ENCODE measurements at regions of chr11 and their contacts with region 1.

Region 1: GRCh38 chr11:33542921-33543320 is 157.7 kb downstream of the C11orf91 start:
- DNase-seq: peak; percentile 72
- H3K4me3 ChIP-seq: no peak overlapping the region
- H3K27ac ChIP-seq: no peak overlapping the region
- H3K4me1 ChIP-seq: no peaks in the 10 kb centered on the region
- H3K27me3 ChIP-seq: no peaks in the 10 kb centered on the region
- CTCF ChIP-seq: peak; percentile 74 to 79
- POLR2A ChIP-seq: no peak

Region 2: DNA sequence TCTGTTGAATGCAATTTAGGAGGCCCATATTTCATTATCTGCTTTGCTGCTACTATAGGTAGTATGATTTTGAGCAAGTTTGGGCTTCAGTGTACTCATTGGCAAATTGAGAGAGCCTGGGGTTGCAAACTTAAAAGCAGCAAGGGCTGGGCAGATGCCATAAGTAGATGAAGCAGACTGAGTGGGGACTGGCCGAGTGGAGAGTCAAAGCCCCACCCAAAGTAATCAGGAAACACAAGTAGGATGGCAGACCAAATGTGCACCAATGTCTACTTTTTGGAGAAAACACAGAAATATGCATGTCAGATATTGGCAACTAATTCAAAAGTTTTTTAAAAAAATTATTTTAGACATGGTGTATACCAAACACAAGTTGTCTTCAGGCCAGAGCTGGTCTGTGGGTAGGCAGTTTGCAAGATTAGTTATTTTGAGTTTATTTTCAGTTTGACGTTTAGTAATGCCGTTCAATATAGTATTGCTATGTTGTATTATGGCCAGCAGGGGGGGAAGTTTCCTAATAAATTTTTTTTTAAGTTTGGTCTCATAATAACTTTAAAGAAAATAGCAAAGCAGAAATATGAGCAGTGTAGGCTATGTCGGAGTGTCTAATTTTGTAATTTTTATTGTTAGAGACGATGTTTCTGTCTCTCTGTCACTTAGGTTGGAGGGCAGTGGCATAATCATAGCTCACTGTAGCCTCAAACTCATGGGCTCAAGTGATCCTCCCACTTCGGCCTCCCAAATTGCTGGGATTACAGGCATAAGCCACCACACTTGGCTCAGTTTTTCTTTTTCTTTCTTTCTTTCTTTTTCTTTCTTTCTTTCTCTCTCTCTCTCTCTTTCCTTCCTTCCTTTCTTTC is 180.6 kb before region 1 on chr11:
- CTCF ChIA-PET with region 1: interaction called, 9 read pairs
- POLR2A ChIA-PET with region 1: no interaction called
- dilution Hi-C with region 1: no loop called
- intact Hi-C with region 1: loop called (anchors 1 kb)
- DNase-seq: peak; percentile 65
- H3K4me3 ChIP-seq: no peak overlapping the region
- H3K27ac ChIP-seq: no peak overlapping the region
- H3K4me1 ChIP-seq: no peaks in the 10 kb centered on the region
- H3K27me3 ChIP-seq: no peaks in the 10 kb centered on the region
- CTCF ChIP-seq: peak; percentile 28 to 35
- POLR2A ChIP-seq: no peak

Region 3: GRCh38 chr11:33376331-33377310 is 166.3 kb before region 1 on chr11:
- CTCF ChIA-PET with region 1: interaction called, 4 read pairs
- POLR2A ChIA-PET with region 1: no interaction called
- dilution Hi-C with region 1: no loop called
- intact Hi-C with region 1: loop called (anchors 5 kb)
- DNase-seq: peak; percentile 25
- H3K4me3 ChIP-seq: peak overlapping the region; percentile 68 to 84 (median 79)
- H3K27ac ChIP-seq: peak overlapping the region; percentile 70
- H3K4me1 ChIP-seq: peaks cover 45% of the 10 kb centered on the region
- H3K27me3 ChIP-seq: no peaks in the 10 kb centered on the region
- CTCF ChIP-seq: no peak
- POLR2A ChIP-seq: no peak

Region 4: GRCh38 chr11:33682446-33682845 is 139.5 kb after region 1 on chr11:
- CTCF ChIA-PET with region 1: interaction called, 40 read pairs
- POLR2A ChIA-PET with region 1: no interaction called
- dilution Hi-C with region 1: no loop called
- intact Hi-C with region 1: loop called (anchors 1 kb)
- DNase-seq: no peak
- H3K4me3 ChIP-seq: no peak overlapping the region
- H3K27ac ChIP-seq: no peak overlapping the region
- H3K4me1 ChIP-seq: no peaks in the 10 kb centered on the region
- H3K27me3 ChIP-seq: no peaks in the 10 kb centered on the region
- CTCF ChIP-seq: no peak
- POLR2A ChIP-seq: no peak

Region 5: DNA sequence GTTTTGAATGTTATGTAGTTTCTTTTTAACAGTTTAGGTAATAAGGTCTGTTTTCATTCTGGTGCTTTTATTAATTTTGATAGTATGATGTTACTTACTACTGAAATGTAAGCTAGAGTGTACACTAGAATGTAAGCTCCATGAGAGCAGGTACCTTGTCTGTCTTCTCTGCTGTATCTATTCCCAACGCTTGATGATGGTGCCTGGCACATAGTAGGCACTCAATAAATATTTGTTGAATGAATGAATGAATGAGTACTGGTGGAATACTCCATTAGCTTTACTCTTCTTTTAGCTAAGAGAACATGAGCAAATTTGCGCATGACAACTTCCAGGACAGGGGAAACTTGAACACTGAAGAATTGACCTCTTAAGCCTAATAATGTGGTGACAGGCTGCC is 555.9 kb after region 1 on chr11:
- CTCF ChIA-PET with region 1: no interaction called
- POLR2A ChIA-PET with region 1: no interaction called
- dilution Hi-C with region 1: no loop called
- intact Hi-C with region 1: no loop called
- DNase-seq: no peak
- H3K4me3 ChIP-seq: no peak overlapping the region
- H3K27ac ChIP-seq: no peak overlapping the region
- H3K4me1 ChIP-seq: no peaks in the 10 kb centered on the region
- H3K27me3 ChIP-seq: no peaks in the 10 kb centered on the region
- CTCF ChIP-seq: no peak
- POLR2A ChIP-seq: no peak

Measured in endothelial cell of umbilical vein (primary cell).